Gastrocnemius medialis (tissue), 4 donors: ENCODE measurements at regions of chr6 and their contacts with region 1.

Region 1: GRCh38 chr6:105836889-105837288 is 249.2 kb upstream of the PRDM1 start:
- DNase-seq: no peak
- ATAC-seq: no peak
- H3K4me3 ChIP-seq: no peak overlapping the region
- H3K27ac ChIP-seq: no peak overlapping the region
- H3K4me1 ChIP-seq: no peaks in the 10 kb centered on the region
- H3K27me3 ChIP-seq: no peaks in the 10 kb centered on the region
- CTCF ChIP-seq: no peak
- POLR2A ChIP-seq: no peak

Region 2: DNA sequence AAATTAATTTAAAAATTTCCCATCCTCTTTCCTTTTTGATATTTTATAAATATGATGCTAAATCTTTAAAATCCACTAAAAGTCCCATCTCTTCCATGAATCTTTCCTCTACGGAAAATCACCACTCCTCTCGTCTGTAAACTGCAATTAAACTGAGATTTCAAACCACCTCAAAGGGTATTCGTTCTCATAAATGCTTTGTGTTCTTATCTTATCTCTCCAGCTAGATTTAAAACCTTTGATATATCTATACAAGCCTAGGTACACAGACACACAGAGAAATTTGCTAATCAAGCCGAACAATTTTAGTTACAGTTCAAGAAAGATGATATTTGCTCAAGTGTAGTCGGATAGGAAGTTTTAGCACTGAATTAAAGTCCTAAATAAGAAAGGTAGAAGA is 34.7 kb after region 1 on chr6:
- in situ Hi-C with region 1: no loop called
- intact Hi-C with region 1: loop called (anchors 1 kb)
- DNase-seq: no peak
- ATAC-seq: no peak
- H3K4me3 ChIP-seq: no peak overlapping the region
- H3K27ac ChIP-seq: no peak overlapping the region
- H3K4me1 ChIP-seq: no peaks in the 10 kb centered on the region
- H3K27me3 ChIP-seq: no peaks in the 10 kb centered on the region
- CTCF ChIP-seq: no peak
- POLR2A ChIP-seq: no peak

Region 3: DNA sequence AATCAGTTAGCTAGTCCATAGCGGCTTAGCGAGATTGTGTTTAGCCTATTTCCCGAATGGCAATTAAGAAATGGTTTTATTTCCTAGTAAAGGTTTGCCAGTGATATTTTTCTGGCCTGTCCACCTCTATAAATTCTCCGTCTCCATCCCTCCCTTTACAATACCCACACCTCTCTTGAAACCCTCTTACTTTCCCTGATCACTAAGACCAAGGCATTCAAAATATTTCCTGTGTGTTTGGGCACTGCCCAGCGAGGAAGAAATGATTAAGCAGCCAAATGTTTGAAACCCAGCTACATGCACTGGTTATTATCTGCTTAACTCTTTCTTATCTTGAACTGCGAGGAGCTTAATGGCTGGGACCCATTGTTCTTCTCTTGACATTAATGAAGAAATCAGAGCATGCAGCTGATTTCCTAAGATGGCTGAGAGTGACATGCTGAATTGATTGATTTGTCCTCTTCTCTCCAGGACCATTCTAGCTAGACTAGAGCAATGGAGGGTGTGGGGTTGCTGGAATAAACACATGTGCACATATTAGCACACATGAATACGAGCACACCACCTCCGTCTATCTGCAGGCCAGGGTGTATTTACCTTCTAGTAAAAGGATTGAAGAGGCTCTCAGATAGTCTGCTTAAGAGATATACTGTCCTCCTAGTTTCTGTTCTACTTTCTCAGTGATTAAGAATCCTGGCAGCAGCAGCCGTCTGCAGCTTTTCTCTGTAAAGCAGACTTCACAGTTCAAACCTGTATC is 203.1 kb after region 1 on chr6:
- in situ Hi-C with region 1: no loop called
- intact Hi-C with region 1: no loop called
- DNase-seq: no peak
- ATAC-seq: no peak
- H3K4me3 ChIP-seq: no peak overlapping the region
- H3K27ac ChIP-seq: no peak overlapping the region
- H3K4me1 ChIP-seq: no peaks in the 10 kb centered on the region
- H3K27me3 ChIP-seq: no peaks in the 10 kb centered on the region
- CTCF ChIP-seq: no peak
- POLR2A ChIP-seq: no peak